Activated CD4-positive, alpha-beta T cell treated with anti-CD3 and anti-CD28 coated beads, Interleukin-2, amount 10 ng/mL, durations not matched to agents 24 days and 14 days (primary cell): ENCODE measurements at regions of chr11 and their contacts with region 1.

Region 1: GRCh38 chr11:62591448-62592145 is at the start of gene TUT1:
- DNase-seq: peak; percentile 99
- H3K4me3 Mint-ChIP-seq: peak within 1 kb of the TSS; percentile 100
- H3K27ac Mint-ChIP-seq: peak within 1 kb of the TSS; percentile 99
- H3K4me1 Mint-ChIP-seq: peaks cover 38% of the 10 kb centered on the region
- H3K27me3 Mint-ChIP-seq: no peaks in the 10 kb centered on the region
- total RNA-seq, gene TUT1: 45.3 and 50.9 TPM in 2 replicates

Region 2: GRCh38 chr11:62556108-62556871 is 35.3 kb before region 1 on chr11:
- intact Hi-C with region 1: loop called (anchors 5 kb)
- DNase-seq: peak; percentile 96
- H3K4me3 Mint-ChIP-seq: peak overlapping the region; percentile 78
- H3K27ac Mint-ChIP-seq: peak overlapping the region; percentile 98
- H3K4me1 Mint-ChIP-seq: peaks cover 86% of the 10 kb centered on the region
- H3K27me3 Mint-ChIP-seq: peaks cover 2% of the 10 kb centered on the region

Region 3: GRCh38 chr11:62612366-62613290 is 21.0 kb after region 1 on chr11 and contains the starts of genes EML3 and ROM1:
- intact Hi-C with region 1: loop called (anchors 1 kb)
- DNase-seq: peak; percentile 97
- H3K4me3 Mint-ChIP-seq: peak within 1 kb of the TSS; percentile 98
- H3K27ac Mint-ChIP-seq: peak within 1 kb of the TSS; percentile 97
- H3K4me1 Mint-ChIP-seq: peaks cover 46% of the 10 kb centered on the region
- H3K27me3 Mint-ChIP-seq: no peaks in the 10 kb centered on the region
- total RNA-seq, gene EML3: 161 and 166 TPM in 2 replicates
- total RNA-seq, gene ROM1: 2.3 and 3.1 TPM in 2 replicates

Region 4: DNA sequence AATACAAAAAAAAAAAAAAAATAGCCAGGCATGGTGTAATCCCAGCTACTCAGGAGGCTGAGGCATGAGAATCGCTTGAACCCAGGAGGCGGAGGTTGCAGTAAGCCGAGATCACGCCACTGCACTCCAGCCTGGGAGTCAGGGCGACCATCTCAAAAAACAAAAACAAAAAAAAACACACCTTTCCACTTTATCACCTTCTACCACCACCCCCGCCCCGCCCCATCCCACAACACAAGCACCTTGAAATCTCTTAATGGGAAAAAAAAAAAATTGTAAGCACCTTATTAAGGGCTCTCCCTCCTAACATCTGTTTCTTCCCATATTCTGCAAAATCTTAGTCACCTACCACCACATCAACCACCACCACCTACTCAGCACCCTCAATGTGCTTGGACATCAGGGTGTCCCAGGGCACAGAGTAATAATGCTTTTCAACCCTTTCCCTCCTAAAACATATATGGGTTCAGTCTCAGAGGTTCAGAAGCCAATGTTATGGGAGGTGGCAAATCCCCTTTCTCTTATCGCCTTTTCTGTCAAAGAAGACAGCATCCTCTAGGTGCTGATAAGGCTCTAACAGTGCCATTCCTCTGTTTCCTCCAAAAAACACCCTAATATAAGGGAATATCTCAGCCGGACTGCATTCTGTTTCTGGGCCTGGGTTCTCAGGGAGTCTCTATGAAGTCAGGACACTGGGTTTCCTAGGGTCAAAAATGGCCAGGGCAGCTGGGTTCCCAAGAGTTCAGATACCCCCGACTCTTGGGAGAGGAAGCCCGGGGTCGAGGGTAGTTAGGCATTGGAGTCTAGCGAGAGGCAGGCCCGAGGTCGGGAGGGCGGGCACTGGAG is 60.8 kb after region 1 on chr11:
- intact Hi-C with region 1: loop called (anchors 1 kb)
- DNase-seq: no peak
- H3K4me3 Mint-ChIP-seq: peak overlapping the region; percentile 98
- H3K27ac Mint-ChIP-seq: peak overlapping the region; percentile 94
- H3K4me1 Mint-ChIP-seq: peaks cover 19% of the 10 kb centered on the region
- H3K27me3 Mint-ChIP-seq: no peaks in the 10 kb centered on the region

Region 5: GRCh38 chr11:62694455-62695167 is 103.0 kb after region 1 on chr11:
- intact Hi-C with region 1: loop called (anchors 5 kb)
- DNase-seq: peak; percentile 93
- H3K4me3 Mint-ChIP-seq: no peak overlapping the region
- H3K27ac Mint-ChIP-seq: peak overlapping the region; percentile 68
- H3K4me1 Mint-ChIP-seq: peaks cover 7% of the 10 kb centered on the region
- H3K27me3 Mint-ChIP-seq: no peaks in the 10 kb centered on the region

Region 6: GRCh38 chr11:62726915-62727763 is 135.5 kb after region 1 on chr11 and contains the start of gene HNRNPUL2:
- intact Hi-C with region 1: loop called (anchors 1 kb)
- DNase-seq: peak; percentile 100
- H3K4me3 Mint-ChIP-seq: peak within 1 kb of the TSS; percentile 93
- H3K27ac Mint-ChIP-seq: peak within 1 kb of the TSS; percentile 99
- H3K4me1 Mint-ChIP-seq: peaks cover 38% of the 10 kb centered on the region
- H3K27me3 Mint-ChIP-seq: peaks cover 2% of the 10 kb centered on the region
- total RNA-seq, gene HNRNPUL2: 60.5 and 60.6 TPM in 2 replicates

Region 7: DNA sequence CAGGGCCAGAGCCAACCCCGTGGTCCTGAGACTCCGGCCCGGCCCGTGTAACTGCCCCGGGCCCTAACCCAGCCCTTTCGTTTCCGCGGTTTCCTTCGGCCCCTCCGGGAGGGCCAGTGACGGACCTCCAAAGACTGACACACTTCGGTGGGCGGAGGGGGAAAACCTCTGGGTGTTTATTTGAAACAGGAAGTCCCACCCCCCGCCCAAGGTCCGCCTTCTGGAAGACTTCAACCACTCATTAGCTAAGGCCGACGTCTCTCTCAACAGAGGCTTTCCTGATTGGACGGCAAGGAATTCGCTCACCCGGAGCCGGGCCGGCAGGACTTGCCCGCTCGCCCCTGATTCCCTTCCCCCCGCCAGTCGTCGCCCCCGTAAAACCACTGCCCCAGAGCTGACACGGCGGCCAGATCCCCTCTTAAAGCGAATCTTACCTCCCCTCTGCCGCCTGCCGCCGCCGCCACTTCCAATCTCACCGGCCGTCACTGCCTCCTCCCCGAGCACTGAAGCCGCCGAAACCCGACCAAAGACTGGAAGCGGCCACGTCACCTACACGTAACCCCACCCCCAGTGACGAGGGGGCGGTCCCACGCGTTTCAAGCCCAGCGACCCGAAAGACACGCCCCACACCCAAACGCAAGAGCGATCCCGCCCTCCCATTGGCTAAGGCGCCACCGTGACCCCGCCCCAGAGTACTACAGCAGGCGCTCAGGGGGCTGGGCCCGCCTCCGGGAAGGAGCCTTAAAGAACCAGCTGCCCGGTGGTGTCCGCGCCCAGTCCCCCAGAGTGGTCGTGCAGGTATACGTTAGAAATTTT is 240.1 kb after region 1 on chr11 and contains the start of gene STX5:
- intact Hi-C with region 1: loop called (anchors 5 kb)
- DNase-seq: peak; percentile 100
- H3K4me3 Mint-ChIP-seq: peak within 1 kb of the TSS; percentile 89
- H3K27ac Mint-ChIP-seq: peak within 1 kb of the TSS; percentile 97
- H3K4me1 Mint-ChIP-seq: peaks cover 38% of the 10 kb centered on the region
- H3K27me3 Mint-ChIP-seq: no peaks in the 10 kb centered on the region
- total RNA-seq, gene STX5: 28.1 and 33.5 TPM in 2 replicates